ENCODE measurements at regions of chrX and their contacts with region 1.

Region 1: GRCh38 chrX:68196939-68197791 is 236.1 kb downstream of the OPHN1 start:
- DNase-seq: no peak
- H3K4me3 ChIP-seq: no peak overlapping the region
- H3K27ac ChIP-seq: no peak overlapping the region
- H3K4me1 ChIP-seq: no peaks in the 10 kb centered on the region
- H3K27me3 ChIP-seq: no peaks in the 10 kb centered on the region
- CTCF ChIP-seq: peak in 3 of 4 experiments; percentile 35 to 59 (median 38)
- EP300 ChIP-seq: no peak
- POLR2A ChIP-seq: no peak

Region 2: GRCh38 chrX:68462653-68463052 is 265.5 kb after region 1 on chrX:
- intact Hi-C with region 1: loop called (anchors 1 kb)
- DNase-seq: no peak
- H3K4me3 ChIP-seq: no peak overlapping the region
- H3K27ac ChIP-seq: no peak overlapping the region
- H3K4me1 ChIP-seq: no peaks in the 10 kb centered on the region
- H3K27me3 ChIP-seq: no peaks in the 10 kb centered on the region
- CTCF ChIP-seq: peak; percentile 22 to 49 (median 29)
- EP300 ChIP-seq: no peak
- POLR2A ChIP-seq: no peak

Measured in sigmoid colon (tissue), 7 donors.